Posterior cingulate gyrus (tissue), 11 donors: ENCODE measurements at regions of chr12 and their contacts with region 1.

Region 1: GRCh38 chr12:56333679-56334489 is at the start of gene PAN2:
- DNase-seq: peak; percentile 90 to 99 (median 94)

Region 2: GRCh38 chr12:56468216-56469006 is 134.5 kb after region 1 on chr12 and contains the start of gene SPRYD4:
- intact Hi-C with region 1: loop called (anchors 1 kb)
- DNase-seq: peak; percentile 90 to 99 (median 94)